ENCODE measurements at regions of chr1 and their contacts with region 1.

Region 1: DNA sequence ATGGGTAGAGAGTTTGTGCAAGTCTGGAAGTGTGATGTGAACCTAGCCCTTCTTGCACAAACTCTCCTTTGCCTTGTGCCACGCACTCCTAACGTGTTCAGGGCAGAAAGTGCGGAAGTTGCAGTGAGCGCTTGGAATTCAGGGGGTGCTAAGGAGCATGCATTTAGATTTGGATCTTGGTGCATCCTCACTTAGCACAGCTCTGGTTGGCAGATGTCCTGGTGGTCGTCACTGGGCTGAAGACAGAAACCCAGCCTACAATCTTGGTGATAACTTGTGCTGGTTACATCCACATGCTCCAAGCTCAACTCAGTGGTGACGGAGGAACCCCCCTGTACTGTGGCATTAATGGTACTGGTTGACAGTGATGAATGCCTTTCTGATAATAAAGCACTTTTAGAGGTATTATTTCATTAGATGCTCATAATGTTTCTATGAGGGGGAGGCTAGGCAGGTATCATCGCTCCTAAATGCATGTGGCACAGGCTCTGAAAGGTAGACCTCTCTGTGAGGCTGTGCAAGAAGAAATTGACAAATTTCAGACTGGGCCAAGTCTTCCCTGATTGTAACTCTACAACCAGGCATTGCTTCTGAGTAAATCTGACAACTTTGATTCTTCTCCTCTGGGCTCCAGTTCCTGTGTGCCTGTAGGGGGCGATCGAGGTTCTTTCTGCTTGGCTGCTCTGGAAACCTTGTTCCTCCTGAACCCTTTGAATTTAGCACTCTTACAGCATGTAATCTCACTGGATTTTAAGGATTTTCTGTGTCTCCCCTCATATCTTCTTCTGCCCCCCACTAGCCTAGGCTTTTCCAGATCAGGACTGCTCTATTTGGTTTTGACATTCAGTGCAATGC is 40.6 kb downstream of the MAPKAPK2 start:
- DNase-seq: no peak
- ATAC-seq: no peak
- H3K4me3 ChIP-seq: no peak overlapping the region
- H3K27ac ChIP-seq: no peak overlapping the region
- H3K4me1 ChIP-seq: peaks cover 2 to 5% of the 10 kb centered on the region in 2 donors
- H3K27me3 ChIP-seq: no peaks in the 10 kb centered on the region

Region 2: GRCh38 chr1:206674745-206675175 is 50.6 kb before region 1 on chr1:
- intact Hi-C with region 1: loop called in 1 of 2 experiments (anchors 5 kb)
- DNase-seq: peak; percentile 86 to 89
- ATAC-seq: peak; percentile 78
- H3K4me3 ChIP-seq: no peak overlapping the region
- H3K27ac ChIP-seq: peak overlapping the region in 1 of 2 donors; percentile 79
- H3K4me1 ChIP-seq: no peaks in the 10 kb centered on the region
- H3K27me3 ChIP-seq: no peaks in the 10 kb centered on the region

Region 3: GRCh38 chr1:206684478-206685333 is 40.6 kb before region 1 on chr1 and contains the start of gene MAPKAPK2:
- intact Hi-C with region 1: loop called (anchors 5 kb)
- DNase-seq: peak; percentile 84 to 93
- ATAC-seq: peak; percentile 87
- H3K4me3 ChIP-seq: peak within 1 kb of the TSS; percentile 99 to 100
- H3K27ac ChIP-seq: peak within 1 kb of the TSS; percentile 100
- H3K4me1 ChIP-seq: peaks cover 6 to 16% of the 10 kb centered on the region in 2 donors
- H3K27me3 ChIP-seq: no peaks in the 10 kb centered on the region
- total RNA-seq, gene MAPKAPK2: 81.3 to 117 TPM